ENCODE measurements at regions of chr16 and their contacts with region 1.

Region 1: DNA sequence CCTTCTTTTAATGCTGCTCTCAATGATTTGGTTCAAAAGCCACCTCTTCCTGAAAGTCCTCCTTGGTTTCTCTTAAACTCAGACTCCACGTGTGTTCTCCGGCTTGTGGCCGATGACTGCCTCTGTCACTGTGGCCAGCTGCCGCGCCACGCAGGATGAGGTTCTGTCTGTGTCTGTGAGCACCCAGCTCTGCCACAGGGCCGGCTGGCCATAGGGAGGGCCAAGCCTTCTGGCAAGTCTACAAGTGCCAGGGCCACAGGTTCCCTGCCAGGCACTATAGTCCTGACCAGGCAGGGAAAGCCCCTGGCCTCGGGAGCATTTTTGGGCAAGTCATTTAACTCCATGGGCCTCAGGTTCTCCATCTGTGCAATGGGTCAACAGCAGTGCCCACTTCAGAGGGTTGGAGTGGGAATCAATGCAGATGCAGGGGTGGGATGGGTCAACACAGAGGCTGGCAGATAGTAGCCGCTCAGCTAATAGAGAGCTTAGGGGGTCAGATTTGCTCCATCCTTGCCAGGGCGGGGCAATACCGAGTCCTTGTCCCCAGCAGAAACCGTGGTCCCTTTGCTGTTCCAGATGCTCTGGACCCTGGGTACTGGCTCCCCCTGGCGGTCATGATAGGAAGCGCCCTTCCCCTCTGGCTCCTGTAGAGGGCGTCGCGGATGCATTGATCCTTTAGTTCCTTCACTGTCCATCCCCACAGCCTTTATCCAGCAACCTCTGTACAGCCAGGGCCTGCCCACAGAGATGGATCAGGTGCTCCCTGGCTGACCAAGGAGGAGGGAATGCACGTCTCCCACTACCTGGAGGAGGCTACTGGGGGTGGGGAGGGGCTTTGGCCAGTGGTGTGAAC is 19.3 kb upstream of the ADGRG3 start:
- DNase-seq: peak; percentile 85
- ATAC-seq: peak; percentile 81

Region 2: DNA sequence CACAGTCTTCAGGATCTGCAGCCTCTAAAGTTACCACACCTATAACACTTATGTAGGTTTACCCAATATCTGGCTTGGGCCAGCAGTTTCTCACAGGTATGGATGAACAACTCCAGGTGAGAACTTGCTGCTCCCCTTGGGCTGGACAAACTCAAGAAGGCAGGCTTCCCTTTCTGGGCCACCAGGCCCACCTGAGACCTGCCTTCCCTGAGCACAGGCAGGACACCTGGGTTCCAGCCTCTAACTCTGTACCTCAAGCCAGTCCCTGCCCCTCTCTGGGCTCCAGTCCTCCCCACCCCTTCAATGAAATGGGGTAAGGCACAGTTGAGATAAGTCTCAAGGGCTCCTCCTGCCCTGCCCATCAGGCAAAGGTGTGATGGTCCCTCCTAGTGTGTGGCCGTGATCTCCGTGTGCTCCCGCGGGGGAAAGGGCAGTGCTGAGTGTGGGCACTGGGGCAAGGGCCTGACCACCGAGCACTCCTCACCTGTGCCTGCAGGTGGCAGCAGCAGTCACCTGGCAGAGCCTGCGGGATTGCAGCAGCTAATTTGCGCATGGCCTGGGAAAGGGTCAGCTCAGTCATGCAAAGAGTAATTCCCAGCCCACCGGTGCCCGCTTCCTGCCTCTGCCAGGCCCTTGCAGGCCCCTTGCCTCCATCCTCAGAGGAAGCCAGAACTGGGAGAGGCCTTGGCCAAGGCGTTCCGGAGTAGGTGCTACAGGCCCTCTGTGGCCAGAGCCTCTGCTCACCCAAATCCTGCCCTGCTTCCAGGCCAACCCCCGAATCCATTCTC is 48.6 kb before region 1 on chr16:
- intact Hi-C with region 1: loop called (anchors 5 kb)
- DNase-seq: peak; percentile 60
- ATAC-seq: peak; percentile 81